Prostate gland (tissue), 2 donors: ENCODE measurements at regions of chr20 and their contacts with region 1.

Region 1: DNA sequence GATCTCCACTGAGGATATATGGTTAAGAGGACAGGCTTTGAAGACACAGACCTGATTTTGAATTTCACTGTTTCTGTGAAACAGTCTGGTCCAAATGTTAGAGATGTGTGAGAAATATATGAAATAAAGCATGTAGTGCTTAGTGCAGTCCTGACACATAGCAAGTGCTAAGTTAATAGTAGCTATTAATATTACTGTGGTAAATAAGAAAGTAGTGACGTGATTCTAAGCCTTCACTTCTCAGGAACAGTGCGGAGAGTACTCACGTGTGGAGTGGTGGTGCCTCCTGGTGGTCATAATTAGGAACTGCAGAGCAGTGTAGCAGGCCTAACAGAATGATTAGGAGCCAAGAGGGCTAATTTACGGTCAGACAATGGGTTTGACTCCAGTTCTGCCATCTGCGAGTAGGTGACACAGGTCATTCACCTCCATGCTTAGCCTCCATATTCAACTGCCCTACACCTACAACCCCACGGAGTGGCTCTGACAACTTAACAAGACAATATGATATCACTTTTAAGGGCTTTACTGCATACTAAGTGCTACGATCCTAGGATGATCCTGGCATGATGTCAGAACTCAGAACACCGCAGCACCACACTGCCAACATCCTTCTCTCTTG is 106.2 kb downstream of the JPH2 start:
- DNase-seq: peak; percentile 66
- H3K4me3 ChIP-seq: no peak overlapping the region
- H3K27ac ChIP-seq: no peak overlapping the region
- H3K4me1 ChIP-seq: no peaks in the 10 kb centered on the region
- H3K27me3 ChIP-seq: no peaks in the 10 kb centered on the region
- CTCF ChIP-seq: peak; percentile 97 to 100 (median 99)
- POLR2A ChIP-seq: no peak

Region 2: GRCh38 chr20:43537921-43538877 is 542.6 kb before region 1 on chr20:
- intact Hi-C with region 1: loop called (anchors 5 kb)
- DNase-seq: peak; percentile 38
- H3K4me3 ChIP-seq: no peak overlapping the region
- H3K27ac ChIP-seq: no peak overlapping the region
- H3K4me1 ChIP-seq: no peaks in the 10 kb centered on the region
- H3K27me3 ChIP-seq: no peaks in the 10 kb centered on the region
- CTCF ChIP-seq: peak; percentile 56 to 81 (median 73)
- POLR2A ChIP-seq: no peak

Region 3: DNA sequence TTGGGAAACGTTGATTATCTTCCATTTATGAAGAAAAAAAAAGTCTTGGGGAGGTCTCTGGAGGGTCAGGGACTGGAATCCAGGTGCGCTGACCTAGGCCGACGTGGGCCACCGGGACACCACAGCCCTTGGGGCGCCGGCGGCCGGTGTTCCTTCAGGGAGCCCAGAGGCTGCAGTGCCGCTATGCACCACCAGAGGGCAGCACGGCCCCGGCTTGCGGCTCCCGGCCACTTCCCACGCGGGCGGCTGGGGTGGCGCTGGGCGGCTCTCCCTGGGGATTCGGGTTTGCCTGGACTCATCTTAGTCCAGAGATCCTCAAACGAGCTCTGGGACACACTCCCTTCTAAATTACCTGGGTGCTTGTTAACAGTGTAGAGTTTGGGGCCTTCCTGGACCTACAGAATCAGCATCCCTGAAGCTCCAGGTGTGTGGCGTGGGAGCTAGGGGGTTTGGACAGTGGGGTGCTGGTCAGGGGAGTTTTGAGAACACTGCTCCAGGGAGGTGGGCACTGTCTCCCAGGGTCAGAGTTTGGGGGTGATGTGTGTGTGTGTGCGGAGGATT is 330.9 kb before region 1 on chr20:
- intact Hi-C with region 1: loop called (anchors 1 kb)
- DNase-seq: peak; percentile 49
- H3K4me3 ChIP-seq: no peak overlapping the region
- H3K27ac ChIP-seq: no peak overlapping the region
- H3K4me1 ChIP-seq: no peaks in the 10 kb centered on the region
- H3K27me3 ChIP-seq: peaks cover 6% of the 10 kb centered on the region
- CTCF ChIP-seq: peak; percentile 96 to 100 (median 98)
- POLR2A ChIP-seq: no peak

Region 4: DNA sequence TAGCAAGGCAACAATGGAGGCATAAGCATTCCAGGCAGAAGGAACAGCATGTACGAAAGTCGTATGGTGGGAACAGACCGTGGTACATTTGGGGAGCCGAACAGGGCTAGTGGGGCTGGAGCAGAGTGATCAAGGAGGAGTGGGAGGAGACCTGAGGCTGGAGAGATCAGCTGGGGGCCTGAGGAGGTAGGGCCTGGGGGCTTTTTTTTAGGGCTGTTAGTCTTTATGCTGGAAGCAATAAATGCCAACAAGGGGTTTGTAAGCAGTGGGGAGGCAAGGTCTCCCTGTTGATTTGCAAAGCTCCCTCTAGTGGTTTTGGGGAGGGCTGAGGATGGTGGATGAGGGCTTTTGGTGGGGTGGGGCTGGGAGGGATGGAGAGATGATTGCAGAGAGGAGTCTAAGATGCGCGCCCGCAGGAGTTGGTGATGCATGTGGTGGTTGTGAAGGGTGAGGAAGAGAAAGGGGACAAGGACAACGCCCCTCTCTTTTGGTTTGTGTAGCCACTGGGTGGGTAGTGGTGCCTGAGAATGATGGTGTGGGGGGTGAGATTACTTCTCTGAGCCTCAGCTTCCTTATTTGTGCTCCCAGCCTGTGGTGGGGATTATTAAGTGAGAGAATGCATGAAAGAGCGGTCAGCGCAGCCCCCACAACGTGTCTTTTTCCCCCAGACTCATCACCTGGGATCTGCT is 240.2 kb before region 1 on chr20:
- intact Hi-C with region 1: loop called (anchors 5 kb)
- DNase-seq: no peak
- H3K4me3 ChIP-seq: no peak overlapping the region
- H3K27ac ChIP-seq: no peak overlapping the region
- H3K4me1 ChIP-seq: no peaks in the 10 kb centered on the region
- H3K27me3 ChIP-seq: peaks cover 5% of the 10 kb centered on the region
- CTCF ChIP-seq: no peak
- POLR2A ChIP-seq: no peak